Activated CD8-positive, alpha-beta memory T cell treated with anti-CD3 and anti-CD28 coated beads, Interleukin-2, amount 10 ng/mL, durations not matched to agents 7 days and 5 days (primary cell): ENCODE measurements at regions of chr9 and their contacts with region 1.

Region 1: DNA sequence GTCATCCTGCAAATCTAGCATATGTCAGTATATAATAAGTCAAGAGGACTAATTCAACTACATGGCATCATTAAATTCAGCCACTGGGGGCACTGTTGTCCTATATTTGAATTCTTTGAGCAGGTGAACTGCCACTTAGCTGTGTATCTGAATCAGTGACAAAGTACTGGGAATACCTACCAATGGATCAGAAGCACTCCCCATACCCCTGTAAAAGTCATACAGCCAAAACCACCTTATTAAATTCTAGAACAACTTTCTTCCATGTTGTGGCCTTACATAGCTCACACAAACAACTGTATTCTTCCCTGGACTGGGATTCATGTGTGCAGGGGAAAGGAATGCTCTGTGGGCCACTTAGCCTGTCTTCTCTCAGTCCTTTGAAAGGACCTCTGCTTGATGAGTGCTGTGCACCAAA is 57.4 kb upstream of the PLPP6 start:
- DNase-seq: peak; percentile 84
- ATAC-seq: peak; percentile 91
- H3K4me3 Mint-ChIP-seq: no peak overlapping the region
- H3K27ac Mint-ChIP-seq: peak overlapping the region; percentile 5
- H3K4me1 Mint-ChIP-seq: peaks cover 20% of the 10 kb centered on the region
- H3K27me3 Mint-ChIP-seq: no peaks in the 10 kb centered on the region

Region 2: DNA sequence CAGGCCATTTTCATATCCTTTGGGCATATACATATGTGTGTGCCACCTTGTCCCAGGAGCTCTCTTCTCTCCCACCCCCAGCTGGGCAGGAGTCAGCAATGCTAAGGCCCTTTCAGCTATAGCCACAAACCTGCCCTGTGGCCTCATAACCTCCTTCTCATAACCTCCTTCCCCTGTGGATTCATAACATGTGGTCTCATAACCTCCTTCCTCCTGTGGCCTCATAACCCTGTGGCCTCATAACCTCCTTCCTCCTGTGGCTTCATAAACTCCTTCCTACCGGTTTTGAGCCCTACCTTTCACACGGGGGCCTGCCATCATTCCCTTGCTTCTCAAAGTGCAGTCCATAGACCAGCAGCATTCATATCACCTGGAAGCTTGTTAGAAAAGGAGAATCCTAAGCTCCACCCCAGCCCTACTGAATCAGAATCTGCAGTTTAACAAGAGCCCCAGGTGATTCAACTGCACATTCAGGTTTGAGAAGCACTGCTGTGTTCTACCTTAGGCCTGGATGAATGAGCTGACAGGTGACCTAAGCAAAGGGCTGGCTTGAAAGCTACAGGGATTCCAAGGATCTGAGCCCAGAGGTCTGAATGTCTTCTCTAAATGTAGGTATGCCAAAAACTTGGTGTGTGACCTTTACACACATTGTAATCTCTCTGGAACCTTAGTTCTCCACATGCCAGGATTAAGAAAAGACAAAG is 15.5 kb after region 1 on chr9:
- CTCF ChIA-PET with region 1: interaction called, 12 read pairs
- DNase-seq: peak; percentile 75
- ATAC-seq: peak; percentile 79
- H3K4me3 Mint-ChIP-seq: no peak overlapping the region
- H3K27ac Mint-ChIP-seq: peak overlapping the region; percentile 52
- H3K4me1 Mint-ChIP-seq: peaks cover 26% of the 10 kb centered on the region
- H3K27me3 Mint-ChIP-seq: peaks cover 3% of the 10 kb centered on the region

Region 3: DNA sequence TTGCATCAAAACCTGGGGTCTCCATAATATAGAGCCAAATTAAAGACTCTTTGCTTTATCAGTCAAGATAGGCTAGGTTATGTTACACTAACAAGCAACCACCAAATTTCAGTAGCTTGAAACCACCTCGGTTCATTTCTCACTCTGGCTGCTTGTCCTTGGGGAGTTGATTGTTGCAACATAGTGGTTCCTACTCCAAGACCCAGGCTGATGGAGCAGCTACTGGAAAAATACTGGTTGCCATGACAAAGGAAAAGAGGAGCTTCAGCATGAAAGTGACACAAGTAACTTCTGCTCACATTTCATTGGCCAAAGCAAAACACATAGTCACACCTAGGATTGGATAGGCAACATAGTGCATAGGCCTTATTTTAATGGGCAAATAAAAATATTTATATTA is 169.5 kb after region 1 on chr9:
- CTCF ChIA-PET with region 1: no interaction called
- DNase-seq: no peak
- ATAC-seq: no peak
- H3K4me3 Mint-ChIP-seq: no peak overlapping the region
- H3K27ac Mint-ChIP-seq: no peak overlapping the region
- H3K4me1 Mint-ChIP-seq: peaks cover 7% of the 10 kb centered on the region
- H3K27me3 Mint-ChIP-seq: peaks cover under 1% of the 10 kb centered on the region